Activated naive CD8-positive, alpha-beta T cell treated with anti-CD3 and anti-CD28 coated beads, Interleukin-2, amount 10 ng/mL, durations not matched to agents 7 days and 5 days (primary cell): ENCODE measurements at regions of chr17 and their contacts with region 1.

Region 1: GRCh38 chr17:43483674-43484372 is at the start of gene DHX8:
- DNase-seq: peak; percentile 99
- ATAC-seq: peak; percentile 98
- H3K4me3 Mint-ChIP-seq: peak within 1 kb of the TSS; percentile 88
- H3K27ac Mint-ChIP-seq: peak within 1 kb of the TSS; percentile 90
- H3K4me1 Mint-ChIP-seq: peaks cover 16% of the 10 kb centered on the region
- H3K27me3 Mint-ChIP-seq: peaks cover 3% of the 10 kb centered on the region
- total RNA-seq, gene DHX8: 60.6 to 62.9 TPM

Region 2: GRCh38 chr17:43388359-43389045 is 95.3 kb before region 1 on chr17:
- POLR2A ChIA-PET with region 1: interaction called, 40 read pairs
- DNase-seq: peak; percentile 96
- ATAC-seq: peak; percentile 61
- H3K4me3 Mint-ChIP-seq: peak overlapping the region; percentile 90
- H3K27ac Mint-ChIP-seq: peak overlapping the region; percentile 98
- H3K4me1 Mint-ChIP-seq: peaks cover 13% of the 10 kb centered on the region
- H3K27me3 Mint-ChIP-seq: no peaks in the 10 kb centered on the region

Region 3: DNA sequence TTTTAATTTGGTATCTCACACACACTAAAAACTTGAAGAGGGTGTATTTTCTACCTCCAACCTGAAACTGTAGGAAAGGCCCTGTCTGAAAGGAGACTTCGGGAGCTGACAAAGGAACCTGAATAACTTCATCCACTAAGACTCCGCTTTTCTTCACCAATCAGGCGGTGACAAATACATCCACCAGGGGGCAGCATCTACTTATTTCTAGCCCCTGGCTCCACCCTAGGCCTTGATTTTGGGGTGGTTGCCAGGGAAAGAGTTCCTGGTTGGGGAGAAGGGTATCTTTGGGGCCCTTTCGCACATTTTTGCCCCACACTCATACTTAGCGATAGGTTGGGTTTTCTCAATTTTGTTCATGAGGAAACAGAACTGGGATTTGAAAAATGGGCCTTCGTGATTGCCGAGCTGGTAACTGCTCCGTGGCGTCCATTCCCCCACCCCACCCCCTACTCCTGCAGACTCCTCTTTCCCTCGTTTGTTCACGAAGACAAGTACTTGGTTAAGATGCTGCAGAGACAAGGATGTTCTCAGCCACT is 89.8 kb before region 1 on chr17:
- POLR2A ChIA-PET with region 1: interaction called, 42 read pairs
- DNase-seq: peak; percentile 77
- ATAC-seq: peak; percentile 49
- H3K4me3 Mint-ChIP-seq: no peak overlapping the region
- H3K27ac Mint-ChIP-seq: peak overlapping the region; percentile 18
- H3K4me1 Mint-ChIP-seq: peaks cover 19% of the 10 kb centered on the region
- H3K27me3 Mint-ChIP-seq: no peaks in the 10 kb centered on the region

Region 4: GRCh38 chr17:43456661-43457361 is 27.0 kb before region 1 on chr17:
- POLR2A ChIA-PET with region 1: no interaction called
- DNase-seq: no peak
- ATAC-seq: no peak
- H3K4me3 Mint-ChIP-seq: no peak overlapping the region
- H3K27ac Mint-ChIP-seq: no peak overlapping the region
- H3K4me1 Mint-ChIP-seq: peaks cover 7% of the 10 kb centered on the region
- H3K27me3 Mint-ChIP-seq: peaks cover 12% of the 10 kb centered on the region